GM10248 (cell line): ENCODE measurements at regions of chr11 and their contacts with region 1.

Region 1: GRCh38 chr11:35165423-35166368 is 26.7 kb downstream of the CD44 start:
- DNase-seq: peak; percentile 77
- CTCF ChIP-seq: no peak

Region 2: GRCh38 chr11:34926101-34926830 is 239.4 kb before region 1 on chr11:
- CTCF ChIA-PET with region 1: interaction called, 12 read pairs
- POLR2A ChIA-PET with region 1: no interaction called
- DNase-seq: no peak
- CTCF ChIP-seq: peak; percentile 58

Region 3: GRCh38 chr11:35006389-35007128 is 159.1 kb before region 1 on chr11:
- CTCF ChIA-PET with region 1: interaction called, 23 read pairs
- POLR2A ChIA-PET with region 1: no interaction called
- DNase-seq: peak; percentile 74
- CTCF ChIP-seq: no peak

Region 4: GRCh38 chr11:35116762-35117640 is 48.7 kb before region 1 on chr11:
- CTCF ChIA-PET with region 1: interaction called, 10 read pairs
- POLR2A ChIA-PET with region 1: no interaction called
- DNase-seq: no peak
- CTCF ChIP-seq: no peak

Region 5: DNA sequence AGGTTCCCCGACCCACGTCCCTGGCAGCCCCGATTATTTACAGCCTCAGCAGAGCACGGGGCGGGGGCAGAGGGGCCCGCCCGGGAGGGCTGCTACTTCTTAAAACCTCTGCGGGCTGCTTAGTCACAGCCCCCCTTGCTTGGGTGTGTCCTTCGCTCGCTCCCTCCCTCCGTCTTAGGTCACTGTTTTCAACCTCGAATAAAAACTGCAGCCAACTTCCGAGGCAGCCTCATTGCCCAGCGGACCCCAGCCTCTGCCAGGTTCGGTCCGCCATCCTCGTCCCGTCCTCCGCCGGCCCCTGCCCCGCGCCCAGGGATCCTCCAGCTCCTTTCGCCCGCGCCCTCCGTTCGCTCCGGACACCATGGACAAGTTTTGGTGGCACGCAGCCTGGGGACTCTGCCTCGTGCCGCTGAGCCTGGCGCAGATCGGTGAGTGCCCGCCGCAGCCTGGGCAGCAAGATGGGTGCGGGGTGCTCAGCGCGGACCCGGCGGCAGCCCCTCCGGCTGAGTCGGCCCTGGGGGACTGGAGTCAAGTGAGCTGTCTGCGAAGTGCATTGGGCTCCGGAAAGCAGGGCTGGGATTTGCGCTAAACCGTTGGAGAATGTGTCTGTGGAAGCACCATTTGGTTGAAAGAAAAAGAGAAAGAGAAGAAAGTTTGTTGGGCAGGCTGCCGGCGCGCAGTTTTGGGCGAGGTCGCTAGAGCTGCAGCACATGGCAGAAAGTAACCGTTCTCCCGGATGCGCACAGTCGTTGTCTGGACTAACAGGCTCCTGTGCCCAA is 26.6 kb before region 1 on chr11 and contains the start of gene CD44:
- CTCF ChIA-PET with region 1: interaction called, 24 read pairs
- POLR2A ChIA-PET with region 1: interaction called, 5 read pairs
- DNase-seq: peak; percentile 76
- CTCF ChIP-seq: no peak

Region 6: GRCh38 chr11:35144136-35144741 is 21.5 kb before region 1 on chr11:
- CTCF ChIA-PET with region 1: interaction called, 31 read pairs
- POLR2A ChIA-PET with region 1: interaction called, 5 read pairs
- DNase-seq: peak; percentile 77
- CTCF ChIP-seq: no peak

Region 7: GRCh38 chr11:35182317-35182939 is 16.7 kb after region 1 on chr11:
- CTCF ChIA-PET with region 1: interaction called, 102 read pairs
- POLR2A ChIA-PET with region 1: no interaction called
- DNase-seq: peak; percentile 35
- CTCF ChIP-seq: no peak